Activated CD4-positive, alpha-beta memory T cell treated with anti-CD3 and anti-CD28 coated beads for 36 hours (primary cell): ENCODE measurements at regions of chr11 and their contacts with region 1.

Region 1: DNA sequence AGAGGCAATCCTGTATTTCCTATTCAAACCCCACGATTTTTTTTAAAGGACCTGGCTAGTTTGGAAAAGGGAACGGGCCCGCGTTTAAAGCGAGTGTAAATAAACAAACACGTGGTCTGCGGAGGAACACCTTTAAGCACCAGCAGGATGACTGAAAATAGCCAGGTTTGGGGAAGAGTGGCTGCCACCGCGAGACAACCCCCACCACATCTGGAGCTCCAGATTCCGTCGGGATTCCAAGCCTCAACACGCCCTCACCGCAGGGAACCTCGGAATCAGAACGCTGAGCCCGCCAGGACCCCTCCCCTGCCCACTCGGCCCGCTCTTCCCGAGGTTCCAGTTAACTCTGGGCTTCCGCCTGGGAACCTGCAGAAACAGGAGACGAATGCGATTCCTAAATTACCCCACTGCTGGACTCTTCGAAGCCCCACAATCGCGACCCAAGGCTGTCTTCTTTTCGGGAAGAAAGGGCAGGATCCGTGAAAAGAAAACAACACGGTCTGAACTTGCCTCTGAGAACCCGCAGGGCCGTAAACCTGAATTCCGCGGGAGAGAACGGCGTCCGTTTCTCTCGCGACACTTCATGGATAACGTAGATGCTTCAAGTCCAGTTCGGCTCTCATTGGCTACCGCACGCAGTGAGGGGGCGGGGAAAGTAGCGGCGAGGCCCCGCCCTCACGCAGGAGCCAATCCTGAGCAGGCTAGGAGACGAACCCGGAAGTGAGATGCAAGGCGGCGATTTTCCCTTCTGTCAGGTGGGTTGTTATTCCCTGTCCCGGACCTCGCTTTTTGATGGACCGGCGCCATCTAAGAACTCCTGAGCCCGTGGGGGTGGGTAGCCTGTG is at the starts of genes ANKRD49 and MRE11:
- DNase-seq: peak; percentile 98
- H3K4me3 Mint-ChIP-seq: peak within 1 kb of the TSS; percentile 96
- H3K27ac Mint-ChIP-seq: peak within 1 kb of the TSS; percentile 89
- H3K4me1 Mint-ChIP-seq: peaks cover 34% of the 10 kb centered on the region
- H3K27me3 Mint-ChIP-seq: no peaks in the 10 kb centered on the region
- total RNA-seq, gene ANKRD49: 18.6 to 19.2 TPM
- total RNA-seq, gene MRE11: 43.4 to 47.6 TPM

Region 2: DNA sequence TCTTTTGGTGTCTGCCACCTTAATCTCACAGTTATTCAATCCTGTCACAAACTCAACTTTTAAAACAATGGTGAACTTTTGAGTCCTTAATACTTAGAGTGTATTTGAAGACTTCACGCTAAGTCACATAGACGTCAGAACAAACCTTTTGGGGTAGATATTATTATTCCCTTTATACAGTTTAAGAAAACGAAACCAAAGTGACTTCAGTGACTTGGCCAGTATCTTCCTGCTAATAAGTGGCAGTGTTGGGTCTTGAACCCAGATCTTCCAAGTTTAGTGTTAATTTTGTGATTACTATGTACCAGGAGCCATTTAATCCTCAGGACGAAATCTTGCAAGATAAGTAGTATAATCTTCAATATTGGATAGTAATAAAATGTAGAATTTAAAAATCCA is 831.3 kb before region 1 on chr11:
- CTCF ChIA-PET with region 1: no interaction called
- POLR2A ChIA-PET with region 1: no interaction called
- intact Hi-C with region 1: loop called (anchors 1 kb)
- DNase-seq: no peak
- H3K4me3 Mint-ChIP-seq: peak overlapping the region; percentile 94
- H3K27ac Mint-ChIP-seq: peak overlapping the region; percentile 95
- H3K4me1 Mint-ChIP-seq: peaks cover 43% of the 10 kb centered on the region
- H3K27me3 Mint-ChIP-seq: no peaks in the 10 kb centered on the region

Region 3: GRCh38 chr11:93784152-93784934 is 709.2 kb before region 1 on chr11 and contains the start of gene MED17:
- CTCF ChIA-PET with region 1: no interaction called
- POLR2A ChIA-PET with region 1: interaction called, 3 read pairs
- intact Hi-C with region 1: loop called (anchors 1 kb)
- DNase-seq: peak; percentile 95
- H3K4me3 Mint-ChIP-seq: peak within 1 kb of the TSS; percentile 94
- H3K27ac Mint-ChIP-seq: peak within 1 kb of the TSS; percentile 93
- H3K4me1 Mint-ChIP-seq: peaks cover 43% of the 10 kb centered on the region
- H3K27me3 Mint-ChIP-seq: no peaks in the 10 kb centered on the region
- total RNA-seq, gene MED17: 32.3 to 34.7 TPM

Region 4: DNA sequence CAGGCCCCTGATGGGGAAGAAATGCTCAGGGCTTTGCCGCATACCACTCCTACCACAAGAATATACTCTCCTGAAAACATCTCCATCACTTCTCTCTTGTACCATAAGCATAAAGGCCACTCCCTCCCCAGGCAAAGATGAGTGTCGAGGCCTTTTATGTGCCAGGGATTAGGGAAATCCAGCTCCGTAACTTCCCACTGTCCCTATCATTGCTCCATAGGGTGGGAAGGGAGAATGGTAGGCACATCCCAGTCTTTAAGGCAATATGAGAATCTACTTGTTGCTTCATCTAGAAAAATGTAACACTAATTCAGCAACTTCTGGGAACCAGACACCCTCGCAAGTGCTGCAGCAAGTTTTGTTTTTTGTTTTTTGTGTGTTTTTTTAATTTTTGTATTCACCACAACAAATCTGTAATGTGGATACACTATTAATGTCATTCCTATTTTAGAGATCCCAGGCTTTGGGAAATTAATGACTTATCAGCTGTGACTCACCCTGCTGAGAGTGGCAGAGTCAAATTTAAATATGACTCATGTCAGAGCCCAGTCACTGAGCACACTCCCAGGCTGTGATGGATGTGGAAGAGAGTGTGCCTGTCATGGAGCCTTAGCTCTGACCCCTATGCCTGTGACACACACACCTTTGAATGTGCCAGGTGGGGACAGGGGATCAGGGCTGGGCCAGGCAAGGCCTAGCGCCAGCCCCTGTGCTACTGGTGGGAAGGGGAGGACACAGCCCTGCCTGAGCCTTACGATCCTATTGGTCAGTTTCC is 341.4 kb before region 1 on chr11:
- CTCF ChIA-PET with region 1: no interaction called
- POLR2A ChIA-PET with region 1: no interaction called
- intact Hi-C with region 1: loop called (anchors 5 kb)
- DNase-seq: peak; percentile 50
- H3K4me3 Mint-ChIP-seq: no peak overlapping the region
- H3K27ac Mint-ChIP-seq: no peak overlapping the region
- H3K4me1 Mint-ChIP-seq: peaks cover 58% of the 10 kb centered on the region
- H3K27me3 Mint-ChIP-seq: no peaks in the 10 kb centered on the region

Region 5: GRCh38 chr11:95067039-95067840 is 573.7 kb after region 1 on chr11:
- CTCF ChIA-PET with region 1: no interaction called
- POLR2A ChIA-PET with region 1: no interaction called
- intact Hi-C with region 1: loop called (anchors 5 kb)
- DNase-seq: peak; percentile 85
- H3K4me3 Mint-ChIP-seq: peak overlapping the region; percentile 87
- H3K27ac Mint-ChIP-seq: peak overlapping the region; percentile 97
- H3K4me1 Mint-ChIP-seq: peaks cover 24% of the 10 kb centered on the region
- H3K27me3 Mint-ChIP-seq: no peaks in the 10 kb centered on the region